ENCODE measurements at regions of chr4 and their contacts with region 1.

Region 1: DNA sequence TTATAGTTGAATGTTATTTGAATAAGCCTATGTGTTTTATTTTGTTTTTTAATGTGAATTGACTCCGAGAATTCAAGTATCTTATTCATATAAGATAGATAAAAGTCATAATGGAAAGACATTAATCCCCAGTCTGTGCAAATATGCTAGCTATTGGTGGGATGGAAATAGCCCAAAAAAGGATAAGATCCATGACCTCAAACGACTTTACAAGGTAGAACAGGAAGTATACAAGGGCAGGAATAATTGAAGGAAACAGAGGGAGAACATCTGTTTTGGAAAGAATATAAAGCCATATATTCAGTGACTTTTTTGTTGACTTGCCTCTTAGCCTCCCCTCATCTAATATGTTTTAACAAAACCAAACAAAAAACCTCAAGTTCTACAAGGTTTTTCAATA is 9.0 kb downstream of the ABCE1 start:
- DNase-seq: no peak
- H3K4me3 ChIP-seq: no peak overlapping the region
- H3K27ac ChIP-seq: no peak overlapping the region
- H3K4me1 ChIP-seq: peaks cover 24% of the 10 kb centered on the region
- CTCF ChIP-seq: no peak

Region 2: DNA sequence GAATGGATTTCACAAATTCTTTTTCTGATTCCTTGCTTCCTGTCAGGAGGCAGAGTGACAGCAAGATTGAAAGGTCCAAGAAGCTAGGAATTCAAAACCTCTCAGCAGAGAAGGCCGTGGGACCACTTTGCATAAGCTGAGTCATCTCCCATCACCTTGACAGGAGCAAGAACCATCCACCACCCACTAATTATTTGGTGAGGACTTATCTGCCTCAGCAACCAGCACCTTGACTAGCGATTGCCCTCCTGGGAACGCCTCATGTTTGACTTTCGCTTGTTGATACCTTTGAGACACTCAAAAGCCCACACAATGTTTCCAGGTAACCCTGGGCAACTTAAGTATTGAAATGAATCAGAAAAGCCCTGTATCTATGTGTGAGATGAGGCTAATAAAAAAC is 733.1 kb before region 1 on chr4:
- CTCF ChIA-PET with region 1: no interaction called
- POLR2A ChIA-PET with region 1: no interaction called
- intact Hi-C with region 1: no loop called
- DNase-seq: no peak
- H3K4me3 ChIP-seq: no peak overlapping the region
- H3K27ac ChIP-seq: no peak overlapping the region
- H3K4me1 ChIP-seq: no peaks in the 10 kb centered on the region
- CTCF ChIP-seq: no peak

Region 3: DNA sequence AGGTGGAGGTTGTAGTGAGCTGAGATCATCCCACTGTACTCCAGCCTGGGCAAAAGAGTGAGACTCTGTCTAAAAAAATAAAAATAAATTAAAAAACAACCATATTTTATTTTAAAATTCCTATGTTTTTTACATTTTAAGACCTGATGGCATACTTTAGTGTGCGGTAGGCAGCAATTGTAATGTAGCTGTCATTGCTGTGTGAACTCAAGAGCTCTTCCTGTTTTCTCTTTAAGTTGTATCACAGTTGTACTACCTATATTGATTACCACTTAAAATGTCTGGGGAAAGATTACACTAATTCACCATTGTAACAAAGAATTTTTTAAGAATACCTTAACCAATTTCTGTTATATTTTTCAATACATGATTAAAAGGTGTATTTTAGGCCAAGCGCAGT is 18.3 kb after region 1 on chr4:
- CTCF ChIA-PET with region 1: no interaction called
- POLR2A ChIA-PET with region 1: interaction called, 6 read pairs
- intact Hi-C with region 1: loop called (anchors 2 kb)
- DNase-seq: no peak
- H3K4me3 ChIP-seq: no peak overlapping the region
- H3K27ac ChIP-seq: no peak overlapping the region
- H3K4me1 ChIP-seq: no peaks in the 10 kb centered on the region
- CTCF ChIP-seq: no peak

Region 4: DNA sequence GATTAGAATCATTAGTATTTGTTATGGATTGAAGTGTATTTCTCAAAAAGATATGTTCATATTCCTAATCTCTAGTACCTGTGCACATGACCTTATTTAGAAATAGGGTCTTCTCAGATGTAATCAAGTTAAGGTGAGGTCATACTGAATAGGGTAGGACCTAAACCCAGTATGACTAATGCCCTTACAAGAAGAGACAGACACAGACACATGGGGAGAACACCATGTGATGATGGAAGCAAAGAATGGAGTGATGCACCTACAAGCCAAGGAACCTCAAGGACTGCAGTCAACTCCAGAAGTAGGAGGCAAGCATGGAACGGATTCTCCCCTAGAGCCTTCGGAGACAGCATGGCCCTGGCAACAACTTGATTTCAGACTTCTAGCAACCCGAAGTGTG is 41.9 kb after region 1 on chr4:
- CTCF ChIA-PET with region 1: no interaction called
- POLR2A ChIA-PET with region 1: interaction called, 3 read pairs
- intact Hi-C with region 1: loop called (anchors 5 kb)
- DNase-seq: no peak
- H3K4me3 ChIP-seq: no peak overlapping the region
- H3K27ac ChIP-seq: no peak overlapping the region
- H3K4me1 ChIP-seq: peaks cover 6% of the 10 kb centered on the region
- CTCF ChIP-seq: no peak

Measured in OCI-LY7 (cell line).